Right lobe of liver (tissue), 6 donors: ENCODE measurements at regions of chr17 and their contacts with region 1.

Region 1: GRCh38 chr17:41811549-41812380 is at the start of gene P3H4:
- DNase-seq: peak; percentile 81 to 83 (median 82)
- ATAC-seq: peak; percentile 89 to 95 (median 93)
- H3K4me3 ChIP-seq: peak within 1 kb of the TSS; percentile 70 to 82 (median 80)
- H3K27ac ChIP-seq: peak within 1 kb of the TSS in 1 of 3 donors; percentile 13
- H3K4me1 ChIP-seq: peaks cover 0 to 10% (median 2%) of the 10 kb centered on the region in 4 donors
- H3K27me3 ChIP-seq: no peaks in the 10 kb centered on the region
- CTCF ChIP-seq: peak; percentile 55 to 80 (median 76)
- POLR2A ChIP-seq: peak; percentile 42
- total RNA-seq, gene P3H4: 1.8 to 3.8 (median 2.8) TPM

Region 2: GRCh38 chr17:41446806-41447205 is 365.0 kb before region 1 on chr17:
- intact Hi-C with region 1: no loop called
- DNase-seq: no peak
- ATAC-seq: no peak
- H3K4me3 ChIP-seq: no peak overlapping the region
- H3K27ac ChIP-seq: no peak overlapping the region
- H3K4me1 ChIP-seq: no peaks in the 10 kb centered on the region
- H3K27me3 ChIP-seq: no peaks in the 10 kb centered on the region
- CTCF ChIP-seq: no peak
- POLR2A ChIP-seq: no peak

Region 3: GRCh38 chr17:41615454-41615853 is 196.3 kb before region 1 on chr17:
- intact Hi-C with region 1: no loop called
- DNase-seq: peak in 1 of 3 donors; percentile 47
- ATAC-seq: no peak
- H3K4me3 ChIP-seq: no peak overlapping the region
- H3K27ac ChIP-seq: no peak overlapping the region
- H3K4me1 ChIP-seq: no peaks in the 10 kb centered on the region
- H3K27me3 ChIP-seq: no peaks in the 10 kb centered on the region
- CTCF ChIP-seq: no peak
- POLR2A ChIP-seq: no peak

Region 4: DNA sequence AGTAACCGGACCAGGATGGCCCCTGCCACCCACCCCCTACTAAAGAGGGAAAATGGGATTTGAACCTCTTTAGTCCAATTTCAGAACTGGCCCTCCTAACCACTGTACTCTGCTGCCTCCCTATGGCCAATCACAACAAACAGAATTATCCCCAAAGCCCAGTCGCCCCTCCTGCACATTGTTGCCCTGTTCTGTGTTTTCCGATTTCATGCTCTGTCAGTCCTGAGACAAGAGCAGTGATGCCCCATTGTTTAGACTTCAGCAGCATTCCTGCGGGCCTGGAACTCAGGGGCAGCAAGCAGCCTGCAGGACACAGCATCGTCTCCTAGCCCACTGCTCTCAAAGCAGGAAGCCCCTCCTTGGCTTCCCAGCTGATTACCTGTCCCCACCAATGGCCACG is 74.0 kb after region 1 on chr17:
- intact Hi-C with region 1: loop called in 1 of 2 experiments (anchors 10 kb)
- DNase-seq: no peak
- ATAC-seq: peak; percentile 34 to 69 (median 49)
- H3K4me3 ChIP-seq: no peak overlapping the region
- H3K27ac ChIP-seq: no peak overlapping the region
- H3K4me1 ChIP-seq: no peaks in the 10 kb centered on the region
- H3K27me3 ChIP-seq: no peaks in the 10 kb centered on the region
- CTCF ChIP-seq: peak in 3 of 4 donors; percentile 28 to 52 (median 46)
- POLR2A ChIP-seq: no peak